Ovary (tissue), 10 donors: ENCODE measurements at regions of chr12 and their contacts with region 1.

Region 1: GRCh38 chr12:122081697-122082221 is 3.2 kb downstream of the MLXIP start:
- DNase-seq: peak; percentile 68 to 82 (median 75)
- H3K4me3 ChIP-seq: peak overlapping the region; percentile 64
- H3K27ac ChIP-seq: peak overlapping the region; percentile 28 to 70
- H3K4me1 ChIP-seq: peaks cover 16% of the 10 kb centered on the region
- H3K27me3 ChIP-seq: no peaks in the 10 kb centered on the region
- CTCF ChIP-seq: no peak
- EP300 ChIP-seq: no peak
- POLR2A ChIP-seq: no peak

Region 2: DNA sequence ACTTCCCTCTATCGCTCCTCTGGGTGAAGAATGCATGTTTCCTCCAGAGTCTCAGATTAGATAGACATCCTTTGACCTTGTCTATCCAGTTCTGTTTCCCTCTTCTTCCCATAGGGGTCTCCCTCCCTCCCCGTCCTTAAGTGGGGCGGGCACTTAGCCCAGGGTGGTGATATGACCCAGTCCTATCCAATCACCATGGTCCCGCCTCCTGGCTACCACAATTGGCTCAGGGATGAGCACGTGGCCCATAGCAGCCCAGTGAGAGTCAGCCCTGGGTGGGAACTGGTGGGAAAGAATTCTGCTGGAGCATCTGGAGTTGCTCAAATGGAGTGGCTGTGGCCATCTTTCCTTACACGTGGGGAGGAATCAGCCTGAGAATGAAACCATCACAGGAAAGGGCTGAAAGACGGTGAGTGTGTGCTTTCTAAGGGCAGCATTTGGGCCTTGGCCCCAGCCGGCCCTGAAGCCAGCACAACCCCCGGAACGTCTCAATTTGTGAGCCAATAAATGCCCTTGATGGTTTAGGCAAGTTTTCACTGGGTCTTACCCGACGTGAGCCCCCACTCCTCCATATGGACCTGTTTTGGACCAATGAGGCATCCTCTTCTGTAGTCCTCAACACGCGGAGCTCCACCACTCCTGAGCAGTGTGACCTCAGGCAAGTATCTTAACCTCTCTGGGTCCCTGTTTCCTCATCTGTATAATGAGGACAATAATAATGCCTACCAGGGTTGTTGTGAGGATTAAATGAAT is 17.6 kb before region 1 on chr12:
- intact Hi-C with region 1: loop called in 2 of 4 experiments (anchors 2 kb)
- DNase-seq: peak; percentile 89 to 97 (median 94)
- H3K4me3 ChIP-seq: peak overlapping the region; percentile 13
- H3K27ac ChIP-seq: peak overlapping the region; percentile 58 to 92
- H3K4me1 ChIP-seq: peaks cover 34% of the 10 kb centered on the region
- H3K27me3 ChIP-seq: no peaks in the 10 kb centered on the region
- CTCF ChIP-seq: peak in 2 of 3 donors; percentile 37 to 44
- EP300 ChIP-seq: no peak
- POLR2A ChIP-seq: peak; percentile 26

Region 3: GRCh38 chr12:122486805-122487426 is 405.2 kb after region 1 on chr12:
- intact Hi-C with region 1: no loop called
- DNase-seq: no peak
- H3K4me3 ChIP-seq: no peak overlapping the region
- H3K27ac ChIP-seq: no peak overlapping the region
- H3K4me1 ChIP-seq: no peaks in the 10 kb centered on the region
- H3K27me3 ChIP-seq: no peaks in the 10 kb centered on the region
- CTCF ChIP-seq: no peak
- EP300 ChIP-seq: no peak
- POLR2A ChIP-seq: no peak